Brain microvascular endothelial cell (primary cell): ENCODE measurements at regions of chr3 and their contacts with region 1.

Region 1: DNA sequence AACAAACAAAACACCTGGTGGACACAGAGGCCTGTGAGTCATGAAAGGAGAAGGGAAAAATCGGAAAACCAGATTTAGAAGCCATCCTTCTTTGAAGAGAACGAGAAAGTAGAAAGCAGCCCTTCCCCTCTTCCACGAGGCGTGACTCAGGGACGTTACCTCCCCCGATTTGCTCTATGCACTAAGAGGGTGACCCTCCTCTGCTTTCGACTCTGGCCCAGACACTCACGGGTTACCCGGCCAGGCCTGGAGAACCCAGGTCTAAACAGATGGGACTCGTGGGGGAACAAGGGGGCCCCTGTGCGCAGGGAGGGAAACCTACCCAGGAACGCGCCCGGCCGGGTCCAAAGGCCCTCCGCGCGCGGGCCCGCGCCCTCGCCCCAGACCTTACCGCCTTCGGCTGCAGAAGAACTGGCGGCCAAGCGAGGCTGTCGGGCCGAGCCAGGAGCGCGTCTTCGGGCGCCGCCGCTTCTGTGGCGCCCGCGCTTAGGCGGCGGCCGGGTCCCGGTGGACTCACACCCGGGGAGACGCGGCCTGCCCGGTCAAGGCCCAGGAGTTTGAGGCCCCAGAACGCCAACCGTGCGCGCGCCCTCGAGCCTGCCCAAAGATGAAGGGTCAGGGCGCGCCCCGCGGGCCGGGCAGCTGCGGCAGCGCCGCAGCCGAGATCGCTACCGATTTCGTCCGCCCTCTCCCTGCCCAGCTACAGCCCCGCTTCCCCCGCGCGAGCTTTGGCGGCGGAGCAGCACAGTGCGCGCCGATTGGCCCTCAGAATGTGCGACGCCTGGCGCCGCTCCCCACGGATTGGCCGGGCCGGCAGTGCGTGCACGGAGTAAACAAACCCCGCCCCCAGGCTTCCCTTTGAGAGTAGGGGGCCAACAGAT is at the start of gene TFDP2:
- DNase-seq: peak; percentile 78
- H3K4me3 ChIP-seq: peak within 1 kb of the TSS; percentile 78
- H3K27ac ChIP-seq: peak within 1 kb of the TSS; percentile 60
- H3K27me3 ChIP-seq: no peaks in the 10 kb centered on the region
- CTCF ChIP-seq: no peak

Region 2: DNA sequence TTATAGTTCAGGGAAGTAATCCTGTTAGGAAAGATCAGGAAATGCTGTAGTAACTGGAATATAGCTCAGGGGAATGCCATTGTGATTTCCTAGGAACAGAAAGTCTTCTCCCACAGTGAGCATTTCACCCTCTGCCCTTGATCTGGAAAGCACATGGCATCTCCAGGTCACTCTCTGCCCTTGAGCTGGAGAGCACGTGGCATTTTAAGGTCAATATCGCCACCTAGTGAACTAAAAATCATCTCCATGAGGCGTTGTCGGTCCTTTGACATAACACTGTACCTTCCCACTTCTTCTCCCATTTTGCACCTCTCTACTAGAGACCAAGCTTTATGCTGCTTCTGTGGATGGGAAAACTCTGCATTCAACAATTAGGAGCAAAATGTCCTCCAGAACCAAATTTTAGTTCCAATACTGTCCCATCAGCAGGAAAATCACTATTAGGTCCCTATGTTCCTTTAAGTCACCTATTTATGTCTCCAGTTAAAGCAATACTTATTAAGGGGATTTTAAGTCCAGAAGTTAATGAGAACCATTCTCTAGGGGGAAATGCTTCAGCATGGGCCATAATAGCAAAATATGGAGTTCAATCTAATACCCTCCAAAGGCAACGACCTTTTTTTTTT is 131.0 kb after region 1 on chr3:
- in situ Hi-C with region 1: loop called (anchors 25 kb)
- DNase-seq: peak; percentile 69
- H3K4me3 ChIP-seq: no peak overlapping the region
- H3K27ac ChIP-seq: no peak overlapping the region
- H3K27me3 ChIP-seq: no peaks in the 10 kb centered on the region
- CTCF ChIP-seq: peak; percentile 65